AG04449 (cell line): ENCODE measurements at regions of chr13 and their contacts with region 1.

Region 1: GRCh38 chr13:95834134-95834765 is 157.3 kb downstream of the DNAJC3 start:
- DNase-seq: peak; percentile 12
- H3K4me3 ChIP-seq: no peak overlapping the region
- CTCF ChIP-seq: peak; percentile 81

Region 2: GRCh38 chr13:95536632-95537241 is 297.5 kb before region 1 on chr13:
- CTCF ChIA-PET with region 1: interaction called, 57 read pairs
- POLR2A ChIA-PET with region 1: no interaction called
- DNase-seq: no peak
- H3K4me3 ChIP-seq: no peak overlapping the region
- CTCF ChIP-seq: peak; percentile 4

Region 3: GRCh38 chr13:95631749-95632148 is 202.5 kb before region 1 on chr13:
- CTCF ChIA-PET with region 1: interaction called, 239 read pairs
- POLR2A ChIA-PET with region 1: no interaction called
- DNase-seq: no peak
- H3K4me3 ChIP-seq: no peak overlapping the region
- CTCF ChIP-seq: no peak

Region 4: GRCh38 chr13:95704510-95704909 is 129.7 kb before region 1 on chr13:
- CTCF ChIA-PET with region 1: interaction called, 12 read pairs
- POLR2A ChIA-PET with region 1: no interaction called
- DNase-seq: no peak
- H3K4me3 ChIP-seq: no peak overlapping the region
- CTCF ChIP-seq: no peak

Region 5: GRCh38 chr13:95858286-95859075 is 24.2 kb after region 1 on chr13:
- CTCF ChIA-PET with region 1: interaction called, 28 read pairs
- POLR2A ChIA-PET with region 1: no interaction called
- DNase-seq: no peak
- H3K4me3 ChIP-seq: no peak overlapping the region
- CTCF ChIP-seq: no peak